ENCODE measurements at regions of chr4 and their contacts with region 1.

Region 1: GRCh38 chr4:107363125-107363524 is 327.0 kb upstream of the DKK2 start:
- DNase-seq: no peak
- ATAC-seq: no peak
- H3K4me3 ChIP-seq: no peak overlapping the region
- H3K27ac ChIP-seq: no peak overlapping the region
- H3K4me1 ChIP-seq: no peaks in the 10 kb centered on the region
- H3K27me3 ChIP-seq: no peaks in the 10 kb centered on the region
- CTCF ChIP-seq: no peak

Region 2: DNA sequence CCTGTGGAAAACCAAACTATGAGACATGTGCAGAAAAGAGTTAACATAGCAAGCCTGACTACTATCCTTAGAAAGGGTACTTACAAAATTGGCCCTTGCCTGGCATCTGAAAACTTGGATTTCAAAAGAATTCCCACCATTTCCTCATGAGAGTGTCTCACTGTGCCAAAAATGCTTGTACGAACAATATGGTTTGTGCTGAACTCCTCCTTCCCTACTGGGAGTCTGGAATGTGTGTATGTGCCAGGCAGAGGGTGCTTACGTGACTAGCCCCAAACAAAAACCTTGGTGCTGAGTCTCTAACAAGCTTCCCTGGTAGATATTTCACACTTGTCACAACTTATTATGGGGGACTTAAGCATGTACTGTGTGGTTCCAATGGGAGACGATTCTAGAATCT is 912.9 kb before region 1 on chr4:
- intact Hi-C with region 1: loop called (anchors 10 kb)
- DNase-seq: no peak
- ATAC-seq: no peak
- H3K4me3 ChIP-seq: no peak overlapping the region
- H3K27ac ChIP-seq: no peak overlapping the region
- H3K4me1 ChIP-seq: no peaks in the 10 kb centered on the region
- H3K27me3 ChIP-seq: no peaks in the 10 kb centered on the region
- CTCF ChIP-seq: no peak

Measured in lower lobe of right lung (tissue), 2 donors.